ENCODE measurements at regions of chr7 and their contacts with region 1.

Region 1: DNA sequence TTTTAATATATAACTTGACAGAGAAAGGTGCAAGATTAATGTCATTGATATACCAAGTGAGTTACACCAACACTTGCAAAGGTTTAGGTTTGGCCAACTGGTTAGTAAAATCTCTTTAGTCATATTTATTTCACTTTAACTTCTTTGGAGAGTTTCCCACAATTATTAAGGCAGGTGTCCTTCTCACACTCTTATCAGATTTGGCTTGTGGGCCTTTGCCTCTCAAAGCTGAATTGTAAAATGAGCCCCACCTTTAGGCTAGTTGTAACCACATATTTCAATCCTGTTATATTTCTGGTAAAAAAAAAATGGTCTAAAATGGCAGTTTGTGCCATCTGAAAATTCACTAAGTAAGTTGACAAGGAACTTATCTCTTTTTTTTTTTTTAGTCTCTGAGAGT is 26.6 kb upstream of the FOXP2 start:
- DNase-seq: no peak
- ATAC-seq: no peak
- H3K4me3 ChIP-seq: no peak overlapping the region
- H3K4me3 Mint-ChIP-seq: no peak overlapping the region
- H3K27ac ChIP-seq: no peak overlapping the region
- H3K27ac Mint-ChIP-seq: no peak overlapping the region
- H3K4me1 ChIP-seq: no peaks in the 10 kb centered on the region
- H3K4me1 Mint-ChIP-seq: no peaks in the 10 kb centered on the region
- H3K27me3 ChIP-seq: no peaks in the 10 kb centered on the region
- H3K27me3 Mint-ChIP-seq: no peaks in the 10 kb centered on the region

Region 2: DNA sequence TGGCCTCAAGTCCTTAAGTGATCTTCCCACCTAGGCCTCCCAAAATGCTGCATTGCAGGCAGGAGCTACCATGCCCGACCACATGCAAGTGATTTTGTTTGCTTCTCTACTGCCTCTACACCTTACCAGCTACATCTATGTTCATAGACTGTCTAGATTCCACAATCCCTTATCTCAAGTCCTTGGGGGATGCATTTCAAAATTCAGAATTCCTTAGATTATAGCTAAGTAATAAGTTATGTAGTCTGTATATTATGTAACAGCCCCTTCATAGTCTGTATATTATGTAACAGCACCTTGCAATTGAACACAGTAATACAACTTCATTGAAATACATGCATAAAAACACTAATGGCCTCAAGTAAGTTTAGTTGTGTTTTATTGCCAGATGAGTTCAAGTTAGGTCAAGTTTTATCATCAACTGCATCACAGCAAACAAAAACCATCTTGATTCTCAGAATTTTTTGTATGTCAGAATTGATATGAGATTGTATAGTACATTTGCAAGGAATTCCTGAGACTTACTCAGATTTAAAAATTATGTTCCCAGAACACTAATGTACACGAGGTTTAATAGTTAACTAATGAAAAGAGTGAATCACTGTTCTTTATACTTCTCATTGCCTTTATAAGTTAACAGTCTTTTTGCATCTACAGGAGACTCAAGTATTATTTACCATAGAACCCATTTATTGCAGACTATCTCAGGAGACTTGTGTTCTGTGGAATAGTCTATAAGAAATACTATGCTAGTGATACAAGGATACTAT is 15.0 kb after region 1 on chr7:
- CTCF ChIA-PET with region 1: no interaction called
- POLR2A ChIA-PET with region 1: interaction called in 1 of 2 experiments, 10 read pairs
- DNase-seq: no peak
- ATAC-seq: no peak
- H3K4me3 ChIP-seq: no peak overlapping the region
- H3K4me3 Mint-ChIP-seq: no peak overlapping the region
- H3K27ac ChIP-seq: no peak overlapping the region
- H3K27ac Mint-ChIP-seq: no peak overlapping the region
- H3K4me1 ChIP-seq: no peaks in the 10 kb centered on the region
- H3K4me1 Mint-ChIP-seq: no peaks in the 10 kb centered on the region
- H3K27me3 ChIP-seq: no peaks in the 10 kb centered on the region
- H3K27me3 Mint-ChIP-seq: no peaks in the 10 kb centered on the region

Region 3: DNA sequence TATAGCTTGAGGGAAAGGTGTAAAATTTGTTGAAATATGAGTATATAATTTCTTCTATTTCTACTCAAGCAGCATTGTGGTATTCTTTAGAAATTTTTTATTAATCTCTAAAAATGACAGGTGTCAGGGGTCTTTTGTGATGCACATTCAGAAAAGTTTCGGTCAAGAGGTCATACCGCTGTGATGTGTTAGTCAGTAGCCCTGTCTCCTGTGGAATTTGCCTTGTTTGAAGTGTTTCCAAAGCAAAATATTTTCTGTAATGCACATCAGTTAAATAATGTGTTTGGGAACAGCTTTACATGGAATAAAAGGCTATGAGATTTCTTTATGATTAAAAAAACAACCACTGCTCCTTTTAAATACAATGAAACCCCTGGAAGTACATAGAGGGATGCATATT is 62.4 kb after region 1 on chr7:
- CTCF ChIA-PET with region 1: no interaction called
- POLR2A ChIA-PET with region 1: no interaction called
- DNase-seq: no peak
- ATAC-seq: no peak
- H3K4me3 ChIP-seq: no peak overlapping the region
- H3K4me3 Mint-ChIP-seq: no peak overlapping the region
- H3K27ac ChIP-seq: no peak overlapping the region
- H3K27ac Mint-ChIP-seq: no peak overlapping the region
- H3K4me1 ChIP-seq: no peaks in the 10 kb centered on the region
- H3K4me1 Mint-ChIP-seq: no peaks in the 10 kb centered on the region
- H3K27me3 ChIP-seq: no peaks in the 10 kb centered on the region
- H3K27me3 Mint-ChIP-seq: peaks cover 4% of the 10 kb centered on the region in 2 donors

Region 4: GRCh38 chr7:114530074-114530611 is 142.1 kb after region 1 on chr7:
- CTCF ChIA-PET with region 1: no interaction called
- POLR2A ChIA-PET with region 1: no interaction called
- DNase-seq: no peak
- ATAC-seq: no peak
- H3K4me3 ChIP-seq: no peak overlapping the region
- H3K4me3 Mint-ChIP-seq: no peak overlapping the region
- H3K27ac ChIP-seq: no peak overlapping the region
- H3K27ac Mint-ChIP-seq: no peak overlapping the region
- H3K4me1 ChIP-seq: no peaks in the 10 kb centered on the region
- H3K4me1 Mint-ChIP-seq: no peaks in the 10 kb centered on the region
- H3K27me3 ChIP-seq: peaks cover 0 to 2% of the 10 kb centered on the region in 2 experiments
- H3K27me3 Mint-ChIP-seq: no peaks in the 10 kb centered on the region

Region 5: DNA sequence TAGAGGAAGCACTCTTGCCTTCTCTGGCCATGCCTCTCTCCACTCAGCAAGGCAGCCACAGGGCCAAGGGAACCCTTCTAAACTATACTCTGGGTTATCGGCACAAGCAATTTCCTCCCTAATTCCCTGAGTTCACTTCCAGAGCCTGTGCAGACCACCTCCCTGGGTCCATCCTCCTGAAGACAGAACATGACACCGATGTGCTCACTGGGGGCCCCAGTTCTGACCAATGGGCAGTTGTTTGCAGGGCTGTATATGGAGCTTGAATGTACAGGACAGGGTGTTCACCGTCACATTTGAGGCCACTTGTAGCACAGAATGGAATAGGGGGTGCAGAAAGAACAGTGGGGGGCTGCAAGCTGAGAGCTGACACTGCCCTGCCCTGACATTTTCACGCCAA is 1564.8 kb after region 1 on chr7:
- CTCF ChIA-PET with region 1: no interaction called
- POLR2A ChIA-PET with region 1: no interaction called
- DNase-seq: no peak
- ATAC-seq: no peak
- H3K4me3 ChIP-seq: no peak overlapping the region
- H3K4me3 Mint-ChIP-seq: no peak overlapping the region
- H3K27ac ChIP-seq: no peak overlapping the region
- H3K27ac Mint-ChIP-seq: no peak overlapping the region
- H3K4me1 ChIP-seq: no peaks in the 10 kb centered on the region
- H3K4me1 Mint-ChIP-seq: no peaks in the 10 kb centered on the region
- H3K27me3 ChIP-seq: no peaks in the 10 kb centered on the region
- H3K27me3 Mint-ChIP-seq: no peaks in the 10 kb centered on the region

Measured in T-cell (primary cell).